ENCODE measurements at regions of chr22 and their contacts with region 1.

Region 1: GRCh38 chr22:46150034-46150654 is at the start of gene PPARA:
- DNase-seq: peak; percentile 63 to 97 (median 73)
- ATAC-seq: peak; percentile 90
- H3K4me3 ChIP-seq: peak within 1 kb of the TSS; percentile 74
- H3K4me3 Mint-ChIP-seq: peak within 1 kb of the TSS; percentile 77 to 90 (median 86)
- H3K27ac ChIP-seq: peak within 1 kb of the TSS; percentile 71
- H3K27ac Mint-ChIP-seq: peak within 1 kb of the TSS; percentile 34 to 90 (median 82)
- H3K4me1 ChIP-seq: peaks cover 10 to 15% of the 10 kb centered on the region in 2 donors
- H3K4me1 Mint-ChIP-seq: peaks cover 13 to 24% (median 20%) of the 10 kb centered on the region in 7 donors
- H3K27me3 ChIP-seq: no peaks in the 10 kb centered on the region
- H3K27me3 Mint-ChIP-seq: peaks cover 0 to 40% (median 0%) of the 10 kb centered on the region in 5 donors
- total RNA-seq, gene PPARA: 13.7 to 21.6 (median 18.5) TPM

Region 2: DNA sequence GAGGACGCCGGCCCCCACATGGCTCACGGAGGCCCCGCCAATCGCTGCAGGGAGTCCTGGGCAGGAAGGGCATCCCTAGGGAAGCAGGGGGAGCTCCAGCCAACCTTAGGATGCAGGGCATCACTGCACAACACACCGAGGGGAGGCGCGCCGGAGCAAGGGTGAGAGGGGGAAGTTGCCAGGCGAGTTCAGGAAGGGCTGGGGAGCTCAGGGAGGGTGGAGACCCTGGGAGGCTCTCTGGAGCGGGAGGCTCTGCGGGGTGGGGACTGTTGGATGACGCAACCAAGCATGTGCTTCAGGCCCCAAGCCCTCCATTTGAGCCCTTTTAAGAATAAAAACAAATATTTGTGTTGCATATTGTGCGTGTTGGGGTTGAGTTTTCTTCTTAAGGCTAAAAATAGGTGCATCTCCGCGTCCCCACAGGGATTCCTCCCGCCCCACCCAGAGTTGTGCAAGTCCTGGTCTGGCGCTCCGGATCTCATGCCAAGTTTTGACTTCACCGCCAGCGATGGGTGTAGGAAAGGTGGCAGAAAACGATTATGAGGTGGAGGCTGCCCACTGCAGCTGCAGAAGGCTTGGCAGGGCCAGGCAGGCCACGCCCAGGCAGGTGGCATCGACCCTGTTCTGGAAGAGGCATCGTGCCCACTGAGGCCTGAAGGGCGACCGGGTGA is 238.4 kb before region 1 on chr22:
- CTCF ChIA-PET with region 1: no interaction called
- POLR2A ChIA-PET with region 1: no interaction called
- intact Hi-C with region 1: no loop called
- DNase-seq: no peak
- ATAC-seq: peak; percentile 23
- H3K4me3 ChIP-seq: no peak overlapping the region
- H3K4me3 Mint-ChIP-seq: no peak overlapping the region
- H3K27ac ChIP-seq: no peak overlapping the region
- H3K27ac Mint-ChIP-seq: no peak overlapping the region
- H3K4me1 ChIP-seq: no peaks in the 10 kb centered on the region
- H3K4me1 Mint-ChIP-seq: peaks cover 0 to 13% (median 0%) of the 10 kb centered on the region in 7 donors
- H3K27me3 ChIP-seq: no peaks in the 10 kb centered on the region
- H3K27me3 Mint-ChIP-seq: peaks cover 0 to 14% (median 5%) of the 10 kb centered on the region in 5 donors

Region 3: GRCh38 chr22:46105494-46106278 is 44.5 kb before region 1 on chr22:
- CTCF ChIA-PET with region 1: no interaction called
- POLR2A ChIA-PET with region 1: no interaction called
- intact Hi-C with region 1: no loop called
- DNase-seq: no peak
- ATAC-seq: no peak
- H3K4me3 ChIP-seq: no peak overlapping the region
- H3K4me3 Mint-ChIP-seq: no peak overlapping the region
- H3K27ac ChIP-seq: no peak overlapping the region
- H3K27ac Mint-ChIP-seq: peak overlapping the region in 2 of 9 donors; percentile 25 to 80
- H3K4me1 ChIP-seq: no peaks in the 10 kb centered on the region
- H3K4me1 Mint-ChIP-seq: no peaks in the 10 kb centered on the region
- H3K27me3 ChIP-seq: no peaks in the 10 kb centered on the region
- H3K27me3 Mint-ChIP-seq: no peaks in the 10 kb centered on the region

Region 4: GRCh38 chr22:46122511-46122971 is 27.6 kb before region 1 on chr22:
- CTCF ChIA-PET with region 1: no interaction called
- POLR2A ChIA-PET with region 1: no interaction called
- intact Hi-C with region 1: loop called in 1 of 2 experiments (anchors 1 kb)
- DNase-seq: peak; percentile 34 to 80 (median 57)
- ATAC-seq: peak; percentile 79
- H3K4me3 ChIP-seq: no peak overlapping the region
- H3K4me3 Mint-ChIP-seq: no peak overlapping the region
- H3K27ac ChIP-seq: no peak overlapping the region
- H3K27ac Mint-ChIP-seq: no peak overlapping the region
- H3K4me1 ChIP-seq: no peaks in the 10 kb centered on the region
- H3K4me1 Mint-ChIP-seq: no peaks in the 10 kb centered on the region
- H3K27me3 ChIP-seq: no peaks in the 10 kb centered on the region
- H3K27me3 Mint-ChIP-seq: no peaks in the 10 kb centered on the region

Region 5: DNA sequence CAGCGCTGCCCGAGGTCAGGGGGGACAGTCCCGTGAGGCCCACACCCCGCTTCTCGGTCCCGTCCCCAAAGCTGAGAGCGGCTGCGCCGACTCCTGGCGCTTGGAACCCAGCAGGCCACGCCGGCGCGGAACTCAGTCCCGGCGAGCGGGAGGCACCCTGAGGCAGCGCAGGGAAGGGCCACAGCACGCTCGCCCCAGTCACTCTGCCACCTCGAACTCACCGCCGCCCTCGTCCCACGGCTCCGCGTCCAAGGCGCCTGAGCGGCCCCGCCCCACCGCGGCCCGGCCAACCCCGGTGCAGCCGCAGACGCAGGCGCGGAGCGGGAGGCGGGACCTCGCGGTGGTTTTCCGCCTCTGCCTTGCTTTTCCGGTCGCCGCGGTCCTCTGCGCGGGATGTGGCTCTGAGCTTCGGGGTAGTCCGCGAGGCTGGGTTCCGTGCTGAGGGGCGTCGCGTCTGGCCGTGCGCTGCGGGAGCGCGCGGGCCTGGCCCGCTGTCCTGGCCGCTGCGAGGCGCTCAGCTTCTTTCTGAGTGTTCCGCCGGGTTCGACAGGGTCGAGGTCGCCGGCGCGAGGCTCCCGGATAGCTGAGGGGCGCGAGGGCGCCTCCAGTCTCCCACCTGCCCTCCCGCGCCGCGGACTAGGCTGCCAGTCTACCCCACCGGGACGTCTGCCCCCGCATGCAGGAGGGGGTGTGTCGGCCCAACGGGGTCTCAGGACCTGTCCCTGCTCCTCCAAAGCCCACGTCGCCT is 100.1 kb after region 1 on chr22 and contains the start of gene CDPF1:
- CTCF ChIA-PET with region 1: interaction called, 3 read pairs
- POLR2A ChIA-PET with region 1: interaction called, 4 read pairs
- intact Hi-C with region 1: loop called (anchors 1 kb)
- DNase-seq: peak; percentile 82 to 96 (median 86)
- ATAC-seq: peak; percentile 97
- H3K4me3 ChIP-seq: peak within 1 kb of the TSS; percentile 71
- H3K4me3 Mint-ChIP-seq: peak within 1 kb of the TSS; percentile 74 to 93 (median 83)
- H3K27ac ChIP-seq: peak within 1 kb of the TSS; percentile 77
- H3K27ac Mint-ChIP-seq: peak within 1 kb of the TSS; percentile 51 to 92 (median 77)
- H3K4me1 ChIP-seq: peaks cover 5 to 7% of the 10 kb centered on the region in 2 donors
- H3K4me1 Mint-ChIP-seq: peaks cover 17 to 32% (median 29%) of the 10 kb centered on the region in 7 donors
- H3K27me3 ChIP-seq: no peaks in the 10 kb centered on the region
- H3K27me3 Mint-ChIP-seq: no peaks in the 10 kb centered on the region
- total RNA-seq, gene CDPF1: 4.2 to 13.8 (median 11.7) TPM

Region 6: GRCh38 chr22:46267431-46268279 is 117.5 kb after region 1 on chr22 and contains the start of gene TTC38:
- CTCF ChIA-PET with region 1: interaction called, 5 read pairs
- POLR2A ChIA-PET with region 1: no interaction called
- intact Hi-C with region 1: loop called in 1 of 2 experiments (anchors 1 kb)
- DNase-seq: peak in 8 of 9 donors; percentile 21 to 72 (median 28)
- ATAC-seq: peak; percentile 90
- H3K4me3 ChIP-seq: peak within 1 kb of the TSS; percentile 63
- H3K4me3 Mint-ChIP-seq: peak within 1 kb of the TSS; percentile 82 to 93 (median 89)
- H3K27ac ChIP-seq: peak within 1 kb of the TSS; percentile 48
- H3K27ac Mint-ChIP-seq: peak within 1 kb of the TSS in 6 of 9 donors; percentile 12 to 77 (median 68)
- H3K4me1 ChIP-seq: peaks cover 0 to 4% of the 10 kb centered on the region in 2 donors
- H3K4me1 Mint-ChIP-seq: peaks cover 6 to 27% (median 17%) of the 10 kb centered on the region in 7 donors
- H3K27me3 ChIP-seq: peaks cover 0 to 3% of the 10 kb centered on the region in 2 donors
- H3K27me3 Mint-ChIP-seq: peaks cover 16 to 35% (median 26%) of the 10 kb centered on the region in 5 donors
- total RNA-seq, gene TTC38: 4.1 to 26.0 (median 7.2) TPM

Region 7: GRCh38 chr22:46335201-46336118 is 185.3 kb after region 1 on chr22 and contains the start of gene TRMU:
- CTCF ChIA-PET with region 1: no interaction called
- POLR2A ChIA-PET with region 1: no interaction called
- intact Hi-C with region 1: loop called in 1 of 2 experiments (anchors 1 kb)
- DNase-seq: peak; percentile 32 to 83 (median 60)
- ATAC-seq: peak; percentile 94
- H3K4me3 ChIP-seq: peak within 1 kb of the TSS; percentile 87
- H3K4me3 Mint-ChIP-seq: peak within 1 kb of the TSS; percentile 92 to 100 (median 95)
- H3K27ac ChIP-seq: peak within 1 kb of the TSS; percentile 82
- H3K27ac Mint-ChIP-seq: peak within 1 kb of the TSS; percentile 77 to 97 (median 94)
- H3K4me1 ChIP-seq: peaks cover 7 to 9% of the 10 kb centered on the region in 2 donors
- H3K4me1 Mint-ChIP-seq: peaks cover 23 to 50% (median 38%) of the 10 kb centered on the region in 7 donors
- H3K27me3 ChIP-seq: no peaks in the 10 kb centered on the region
- H3K27me3 Mint-ChIP-seq: no peaks in the 10 kb centered on the region
- total RNA-seq, gene TRMU: 56.9 to 92.1 (median 70.3) TPM

Measured in naive thymus-derived CD4-positive, alpha-beta T cell (primary cell).